Heart left ventricle (tissue), 16 donors: ENCODE measurements at regions of chr14 and their contacts with region 1.

Region 1: GRCh38 chr14:54347997-54348611 is 48.7 kb upstream of the CDKN3 start:
- DNase-seq: no peak
- ATAC-seq: peak in 2 of 4 donors; percentile 34 to 51
- H3K4me3 ChIP-seq: no peak overlapping the region
- H3K27ac ChIP-seq: peak overlapping the region in 8 of 12 donors; percentile 37 to 81 (median 68)
- H3K4me1 ChIP-seq: peaks cover 0 to 39% (median 13%) of the 10 kb centered on the region in 12 donors
- H3K27me3 ChIP-seq: no peaks in the 10 kb centered on the region
- CTCF ChIP-seq: peak; percentile 59 to 82 (median 71)
- POLR2A ChIP-seq: no peak

Region 2: DNA sequence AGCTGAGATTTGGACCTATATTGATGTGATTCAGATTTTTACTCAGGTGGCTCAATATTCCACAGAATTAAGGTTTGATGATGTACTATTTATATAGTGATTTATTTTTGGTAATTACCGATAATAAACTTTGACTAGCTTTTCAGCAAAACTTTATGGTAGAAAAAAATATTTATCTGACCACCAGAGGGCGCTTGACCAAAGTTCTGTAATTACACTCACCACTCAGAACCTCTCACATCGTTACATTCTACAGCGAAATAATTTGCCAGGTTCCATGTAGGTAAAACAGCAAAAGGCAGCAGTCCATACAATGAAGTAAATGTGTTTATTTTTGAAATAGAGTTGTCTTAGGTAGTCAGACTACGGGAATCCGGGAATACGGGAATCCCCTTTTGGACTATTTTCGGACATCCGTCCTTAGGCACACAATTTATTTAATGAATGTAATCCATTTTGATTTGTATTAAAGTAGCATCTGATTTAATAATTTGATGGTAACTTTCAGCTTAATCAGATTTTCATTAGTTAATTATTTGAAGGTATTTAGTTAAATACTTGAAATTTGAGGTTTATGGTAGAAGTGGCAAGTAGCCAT is 1052.0 kb before region 1 on chr14:
- intact Hi-C with region 1: loop called in 9 of 10 experiments (anchors 5 to 10 kb)
- DNase-seq: no peak
- ATAC-seq: no peak
- H3K4me3 ChIP-seq: no peak overlapping the region
- H3K27ac ChIP-seq: no peak overlapping the region
- H3K4me1 ChIP-seq: no peaks in the 10 kb centered on the region
- H3K27me3 ChIP-seq: no peaks in the 10 kb centered on the region
- CTCF ChIP-seq: peak; percentile 52 to 87 (median 74)
- POLR2A ChIP-seq: no peak

Region 3: DNA sequence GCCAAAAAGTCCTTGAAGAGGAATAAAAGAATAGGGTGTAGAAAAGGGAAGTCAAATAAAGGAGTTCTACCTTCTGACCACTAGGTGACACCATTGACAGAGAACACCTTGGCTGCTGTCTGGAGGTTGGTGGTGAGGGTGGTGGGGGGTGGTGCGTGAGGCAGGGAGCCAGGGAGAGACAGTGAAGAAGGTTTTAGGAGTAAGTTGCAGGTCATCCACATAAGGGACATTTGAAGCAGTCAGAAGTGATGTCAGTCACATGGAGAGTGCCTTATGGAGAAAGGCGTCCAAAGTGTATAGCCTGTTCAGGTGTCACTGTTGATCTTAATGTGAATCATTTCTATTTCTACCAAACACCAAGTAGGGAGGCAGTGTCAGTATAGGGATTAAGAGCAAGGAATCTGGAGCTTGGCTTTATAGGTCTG is 915.7 kb before region 1 on chr14:
- intact Hi-C with region 1: loop called in 3 of 10 experiments (anchors 5 to 10 kb)
- DNase-seq: no peak
- ATAC-seq: peak in 3 of 4 donors; percentile 47 to 61 (median 54)
- H3K4me3 ChIP-seq: no peak overlapping the region
- H3K27ac ChIP-seq: no peak overlapping the region
- H3K4me1 ChIP-seq: no peaks in the 10 kb centered on the region
- H3K27me3 ChIP-seq: no peaks in the 10 kb centered on the region
- CTCF ChIP-seq: peak; percentile 12 to 62 (median 49)
- POLR2A ChIP-seq: no peak

Region 4: GRCh38 chr14:53533384-53533970 is 814.6 kb before region 1 on chr14:
- intact Hi-C with region 1: loop called in 7 of 10 experiments (anchors 2 to 5 kb)
- DNase-seq: no peak
- ATAC-seq: no peak
- H3K4me3 ChIP-seq: no peak overlapping the region
- H3K27ac ChIP-seq: peak overlapping the region in 1 of 12 donors; percentile 10
- H3K4me1 ChIP-seq: peaks cover 0 to 15% (median 0%) of the 10 kb centered on the region in 12 donors
- H3K27me3 ChIP-seq: no peaks in the 10 kb centered on the region
- CTCF ChIP-seq: no peak
- POLR2A ChIP-seq: no peak

Region 5: DNA sequence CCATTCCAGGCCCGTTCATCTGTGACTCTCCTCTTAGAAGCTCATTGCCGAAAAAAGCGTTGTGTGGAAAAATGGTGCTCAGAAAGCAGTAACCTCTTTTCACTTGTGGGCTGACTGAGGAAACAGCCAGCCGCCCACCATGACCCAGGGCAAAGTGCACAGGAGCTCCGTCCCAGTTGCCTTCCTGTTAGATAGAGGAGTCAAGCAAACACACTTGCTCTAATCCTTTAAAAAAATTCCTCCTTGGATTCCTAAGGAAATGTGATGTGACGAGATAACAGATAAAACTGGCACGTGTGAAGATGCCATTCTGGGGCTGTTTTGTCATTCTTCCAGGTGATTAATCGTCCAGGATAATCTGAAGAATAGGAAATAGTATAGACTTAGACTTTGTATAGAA is 798.1 kb before region 1 on chr14:
- intact Hi-C with region 1: loop called in 1 of 10 experiments (anchors 5 kb)
- DNase-seq: no peak
- ATAC-seq: no peak
- H3K4me3 ChIP-seq: no peak overlapping the region
- H3K27ac ChIP-seq: no peak overlapping the region
- H3K4me1 ChIP-seq: no peaks in the 10 kb centered on the region
- H3K27me3 ChIP-seq: no peaks in the 10 kb centered on the region
- CTCF ChIP-seq: no peak
- POLR2A ChIP-seq: no peak

Region 6: GRCh38 chr14:54291491-54292191 is 56.5 kb before region 1 on chr14:
- intact Hi-C with region 1: no loop called
- DNase-seq: peak in 2 of 5 donors; percentile 25 to 39
- ATAC-seq: peak; percentile 26 to 84 (median 64)
- H3K4me3 ChIP-seq: no peak overlapping the region
- H3K27ac ChIP-seq: peak overlapping the region in 5 of 12 donors; percentile 38 to 68 (median 66)
- H3K4me1 ChIP-seq: peaks cover 0 to 14% (median 0%) of the 10 kb centered on the region in 12 donors
- H3K27me3 ChIP-seq: no peaks in the 10 kb centered on the region
- CTCF ChIP-seq: no peak
- POLR2A ChIP-seq: no peak